ENCODE measurements at regions of chr18 and their contacts with region 1.

Region 1: GRCh38 chr18:47748847-47749599 is 181.4 kb downstream of the SMAD2 start:
- DNase-seq: peak; percentile 70 to 81 (median 78)
- H3K4me3 ChIP-seq: no peak overlapping the region
- H3K4me3 Mint-ChIP-seq: peak overlapping the region in 2 of 7 donors; percentile 28 to 69
- H3K27ac ChIP-seq: no peak overlapping the region
- H3K27ac Mint-ChIP-seq: peak overlapping the region in 2 of 8 donors; percentile 43 to 66
- H3K4me1 ChIP-seq: peaks cover 7% of the 10 kb centered on the region
- H3K4me1 Mint-ChIP-seq: peaks cover 6 to 7% (median 6%) of the 10 kb centered on the region in 3 donors
- H3K27me3 ChIP-seq: peaks cover 7% of the 10 kb centered on the region
- H3K27me3 Mint-ChIP-seq: peaks cover 5 to 10% of the 10 kb centered on the region in 2 donors

Region 2: DNA sequence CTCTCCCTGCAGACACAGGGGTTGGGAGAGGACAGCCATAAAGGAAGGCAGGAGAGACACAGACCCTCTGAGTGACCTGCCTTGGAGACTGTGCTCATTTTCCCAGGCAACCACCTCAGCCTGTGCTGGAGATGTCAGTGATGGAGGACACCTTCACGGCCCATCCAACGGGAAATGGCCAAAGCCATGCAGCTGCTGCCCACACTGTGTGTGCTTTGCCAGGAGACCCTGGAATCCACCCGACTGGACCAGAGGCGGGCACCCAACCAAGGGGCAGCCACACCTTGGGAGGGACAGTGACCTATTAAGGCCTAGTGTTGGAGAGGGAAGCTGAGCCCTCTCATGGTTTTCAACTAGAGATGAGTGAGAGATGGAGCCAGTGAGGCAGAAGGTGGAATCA is 11.1 kb before region 1 on chr18:
- CTCF ChIA-PET with region 1: interaction called, 11 read pairs
- POLR2A ChIA-PET with region 1: no interaction called
- DNase-seq: no peak
- H3K4me3 ChIP-seq: no peak overlapping the region
- H3K4me3 Mint-ChIP-seq: no peak overlapping the region
- H3K27ac ChIP-seq: no peak overlapping the region
- H3K27ac Mint-ChIP-seq: no peak overlapping the region
- H3K4me1 ChIP-seq: no peaks in the 10 kb centered on the region
- H3K4me1 Mint-ChIP-seq: no peaks in the 10 kb centered on the region
- H3K27me3 ChIP-seq: peaks cover 5% of the 10 kb centered on the region
- H3K27me3 Mint-ChIP-seq: peaks cover 17 to 41% of the 10 kb centered on the region in 2 donors

Region 3: GRCh38 chr18:47893939-47894699 is 145.1 kb after region 1 on chr18:
- CTCF ChIA-PET with region 1: no interaction called
- POLR2A ChIA-PET with region 1: no interaction called
- DNase-seq: no peak
- H3K4me3 ChIP-seq: no peak overlapping the region
- H3K4me3 Mint-ChIP-seq: no peak overlapping the region
- H3K27ac ChIP-seq: no peak overlapping the region
- H3K27ac Mint-ChIP-seq: peak overlapping the region in 3 of 8 donors; percentile 26 to 80 (median 39)
- H3K4me1 ChIP-seq: peaks cover 17% of the 10 kb centered on the region
- H3K4me1 Mint-ChIP-seq: peaks cover 48 to 57% (median 55%) of the 10 kb centered on the region in 3 donors
- H3K27me3 ChIP-seq: no peaks in the 10 kb centered on the region
- H3K27me3 Mint-ChIP-seq: no peaks in the 10 kb centered on the region